Activated naive CD4-positive, alpha-beta T cell treated with anti-CD3 and anti-CD28 coated beads for 36 hours (primary cell): ENCODE measurements at regions of chr11 and their contacts with region 1.

Region 1: DNA sequence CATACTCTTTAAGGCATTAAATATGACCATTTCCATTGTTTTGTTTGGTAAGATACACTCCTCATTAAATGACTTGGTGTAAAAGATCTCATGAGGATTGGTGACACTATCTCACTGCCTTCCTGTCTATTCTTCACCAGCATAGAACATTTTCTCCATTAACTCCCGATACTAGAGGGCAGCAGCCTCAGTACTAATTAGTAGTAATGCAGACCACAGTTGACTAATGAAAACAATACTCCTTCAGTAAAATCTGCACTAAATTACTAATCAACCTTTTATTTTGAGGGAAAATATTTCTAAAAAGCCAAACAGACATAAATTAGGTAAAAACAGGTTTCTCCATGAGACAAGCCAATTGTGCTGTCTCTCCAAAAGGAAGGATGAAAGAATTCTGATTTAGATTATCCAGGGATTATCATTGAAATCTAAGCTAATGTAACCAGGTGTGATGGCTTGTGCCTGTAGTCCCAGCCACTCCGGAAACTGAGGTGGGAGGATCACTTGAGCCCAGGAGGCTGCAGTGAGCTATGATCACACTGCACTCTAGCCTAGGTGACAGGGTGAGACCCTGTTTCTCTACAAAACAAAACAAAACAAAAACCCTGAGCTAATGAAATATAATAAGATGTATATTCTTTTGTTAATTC is 9.4 kb downstream of the PGM2L1 start:
- DNase-seq: peak; percentile 90
- H3K4me3 Mint-ChIP-seq: no peak overlapping the region
- H3K27ac Mint-ChIP-seq: peak overlapping the region; percentile 72
- H3K4me1 Mint-ChIP-seq: peaks cover 33% of the 10 kb centered on the region
- H3K27me3 Mint-ChIP-seq: no peaks in the 10 kb centered on the region

Region 2: DNA sequence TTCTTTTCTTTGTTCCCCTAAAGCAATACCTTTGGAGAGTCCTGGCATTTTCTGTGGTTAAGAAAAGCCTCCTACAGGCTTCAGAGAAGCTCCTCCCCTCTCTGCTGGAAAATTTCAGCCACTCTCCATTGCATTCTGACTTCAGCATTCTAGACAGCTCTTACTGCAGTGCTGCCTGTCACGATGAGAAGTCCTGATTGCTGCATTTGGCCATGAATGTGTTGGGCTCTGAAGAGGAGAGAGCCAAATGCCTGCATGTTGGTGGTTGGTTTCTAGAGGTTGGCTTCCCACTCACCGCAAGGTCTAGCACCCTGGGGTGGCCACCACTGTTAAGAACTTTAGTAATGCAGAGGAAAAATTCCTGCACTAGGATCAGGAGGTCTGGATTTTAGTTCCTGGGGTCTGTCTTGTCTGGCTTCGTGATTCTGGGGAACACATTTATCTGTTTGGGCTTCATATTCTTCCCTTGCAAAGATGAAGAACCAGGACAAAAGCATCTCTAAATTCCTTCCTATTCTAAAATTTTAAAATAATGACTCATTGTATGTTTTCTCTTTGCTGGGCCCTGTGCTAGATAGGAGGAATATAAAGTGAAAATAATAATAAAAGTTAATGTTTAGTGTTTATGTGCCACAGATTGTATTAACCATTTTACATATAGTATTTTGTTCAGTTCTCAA is 550.2 kb before region 1 on chr11:
- CTCF ChIA-PET with region 1: no interaction called
- intact Hi-C with region 1: no loop called
- DNase-seq: no peak
- H3K4me3 Mint-ChIP-seq: no peak overlapping the region
- H3K27ac Mint-ChIP-seq: no peak overlapping the region
- H3K4me1 Mint-ChIP-seq: no peaks in the 10 kb centered on the region
- H3K27me3 Mint-ChIP-seq: no peaks in the 10 kb centered on the region

Region 3: GRCh38 chr11:74170694-74171629 is 217.8 kb before region 1 on chr11 and contains the starts of genes C2CD3 and PPME1:
- CTCF ChIA-PET with region 1: no interaction called
- intact Hi-C with region 1: no loop called
- DNase-seq: peak; percentile 99
- H3K4me3 Mint-ChIP-seq: no peak within 1 kb of the TSS
- H3K27ac Mint-ChIP-seq: no peak within 1 kb of the TSS
- H3K4me1 Mint-ChIP-seq: peaks cover 17% of the 10 kb centered on the region
- H3K27me3 Mint-ChIP-seq: no peaks in the 10 kb centered on the region
- total RNA-seq, gene C2CD3: 21.3 to 23.1 TPM
- total RNA-seq, gene PPME1: 19.0 to 22.1 TPM

Region 4: DNA sequence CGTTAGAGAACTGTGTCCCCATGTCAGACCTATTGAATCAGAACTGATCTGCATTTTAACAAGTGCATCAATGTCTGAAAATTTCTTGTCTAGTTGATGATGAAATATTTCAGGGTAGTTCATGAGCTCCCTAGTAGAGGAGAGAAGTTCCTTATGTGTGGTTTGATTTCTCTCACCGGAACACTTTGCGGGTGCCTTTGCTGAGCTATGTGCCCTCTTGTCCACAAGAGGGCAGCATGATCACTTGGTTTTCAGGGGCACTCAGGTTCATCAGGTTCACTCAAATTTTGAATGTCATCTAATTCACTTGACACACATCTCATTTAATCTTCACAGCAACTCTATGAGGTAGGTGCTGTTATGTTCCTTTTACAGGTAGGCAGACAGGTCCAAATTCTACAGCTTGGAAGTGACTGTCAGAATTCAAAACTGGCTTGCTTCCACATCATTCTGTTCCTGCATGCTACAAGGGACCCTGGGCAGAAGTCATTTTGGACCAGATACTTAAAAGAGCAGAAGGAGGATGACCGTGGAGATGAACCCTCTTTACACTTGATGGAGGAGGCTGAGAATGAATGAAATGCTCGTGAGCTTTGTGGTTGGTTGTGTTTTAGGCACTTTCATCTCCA is 132.9 kb before region 1 on chr11:
- CTCF ChIA-PET with region 1: interaction called, 6 read pairs
- intact Hi-C with region 1: loop called (anchors 5 kb)
- DNase-seq: peak; percentile 68
- H3K4me3 Mint-ChIP-seq: no peak overlapping the region
- H3K27ac Mint-ChIP-seq: no peak overlapping the region
- H3K4me1 Mint-ChIP-seq: peaks cover 3% of the 10 kb centered on the region
- H3K27me3 Mint-ChIP-seq: no peaks in the 10 kb centered on the region

Region 5: GRCh38 chr11:74418509-74418895 is 29.7 kb after region 1 on chr11:
- CTCF ChIA-PET with region 1: interaction called, 5 read pairs
- intact Hi-C with region 1: loop called (anchors 1 kb)
- DNase-seq: no peak
- H3K4me3 Mint-ChIP-seq: no peak overlapping the region
- H3K27ac Mint-ChIP-seq: peak overlapping the region; percentile 83
- H3K4me1 Mint-ChIP-seq: peaks cover 28% of the 10 kb centered on the region
- H3K27me3 Mint-ChIP-seq: no peaks in the 10 kb centered on the region

Region 6: GRCh38 chr11:74443071-74443864 is 54.5 kb after region 1 on chr11:
- CTCF ChIA-PET with region 1: interaction called, 29 read pairs
- intact Hi-C with region 1: no loop called
- DNase-seq: no peak
- H3K4me3 Mint-ChIP-seq: no peak overlapping the region
- H3K27ac Mint-ChIP-seq: no peak overlapping the region
- H3K4me1 Mint-ChIP-seq: no peaks in the 10 kb centered on the region
- H3K27me3 Mint-ChIP-seq: no peaks in the 10 kb centered on the region

Region 7: GRCh38 chr11:74570266-74571061 is 181.7 kb after region 1 on chr11:
- CTCF ChIA-PET with region 1: interaction called, 3 read pairs
- intact Hi-C with region 1: loop called (anchors 1 kb)
- DNase-seq: peak; percentile 55
- H3K4me3 Mint-ChIP-seq: no peak overlapping the region
- H3K27ac Mint-ChIP-seq: no peak overlapping the region
- H3K4me1 Mint-ChIP-seq: no peaks in the 10 kb centered on the region
- H3K27me3 Mint-ChIP-seq: no peaks in the 10 kb centered on the region

Region 8: GRCh38 chr11:74592441-74593362 is 203.9 kb after region 1 on chr11 and contains the start of gene POLD3:
- CTCF ChIA-PET with region 1: no interaction called
- intact Hi-C with region 1: loop called (anchors 2 kb)
- DNase-seq: peak; percentile 98
- H3K4me3 Mint-ChIP-seq: peak within 1 kb of the TSS; percentile 89
- H3K27ac Mint-ChIP-seq: peak within 1 kb of the TSS; percentile 98
- H3K4me1 Mint-ChIP-seq: peaks cover 28% of the 10 kb centered on the region
- H3K27me3 Mint-ChIP-seq: no peaks in the 10 kb centered on the region
- total RNA-seq, gene POLD3: 84.8 to 91.9 TPM

Region 9: GRCh38 chr11:74726547-74727182 is 337.9 kb after region 1 on chr11:
- CTCF ChIA-PET with region 1: no interaction called
- intact Hi-C with region 1: loop called (anchors 10 kb)
- DNase-seq: peak; percentile 69
- H3K4me3 Mint-ChIP-seq: no peak overlapping the region
- H3K27ac Mint-ChIP-seq: no peak overlapping the region
- H3K4me1 Mint-ChIP-seq: peaks cover 9% of the 10 kb centered on the region
- H3K27me3 Mint-ChIP-seq: peaks cover 27% of the 10 kb centered on the region

Region 10: GRCh38 chr11:75105462-75105925 is 716.7 kb after region 1 on chr11:
- CTCF ChIA-PET with region 1: no interaction called
- intact Hi-C with region 1: no loop called
- DNase-seq: no peak
- H3K4me3 Mint-ChIP-seq: no peak overlapping the region
- H3K27ac Mint-ChIP-seq: no peak overlapping the region
- H3K4me1 Mint-ChIP-seq: peaks cover 12% of the 10 kb centered on the region
- H3K27me3 Mint-ChIP-seq: peaks cover 23% of the 10 kb centered on the region